ENCODE measurements at regions of chr10 and their contacts with region 1.

Region 1: DNA sequence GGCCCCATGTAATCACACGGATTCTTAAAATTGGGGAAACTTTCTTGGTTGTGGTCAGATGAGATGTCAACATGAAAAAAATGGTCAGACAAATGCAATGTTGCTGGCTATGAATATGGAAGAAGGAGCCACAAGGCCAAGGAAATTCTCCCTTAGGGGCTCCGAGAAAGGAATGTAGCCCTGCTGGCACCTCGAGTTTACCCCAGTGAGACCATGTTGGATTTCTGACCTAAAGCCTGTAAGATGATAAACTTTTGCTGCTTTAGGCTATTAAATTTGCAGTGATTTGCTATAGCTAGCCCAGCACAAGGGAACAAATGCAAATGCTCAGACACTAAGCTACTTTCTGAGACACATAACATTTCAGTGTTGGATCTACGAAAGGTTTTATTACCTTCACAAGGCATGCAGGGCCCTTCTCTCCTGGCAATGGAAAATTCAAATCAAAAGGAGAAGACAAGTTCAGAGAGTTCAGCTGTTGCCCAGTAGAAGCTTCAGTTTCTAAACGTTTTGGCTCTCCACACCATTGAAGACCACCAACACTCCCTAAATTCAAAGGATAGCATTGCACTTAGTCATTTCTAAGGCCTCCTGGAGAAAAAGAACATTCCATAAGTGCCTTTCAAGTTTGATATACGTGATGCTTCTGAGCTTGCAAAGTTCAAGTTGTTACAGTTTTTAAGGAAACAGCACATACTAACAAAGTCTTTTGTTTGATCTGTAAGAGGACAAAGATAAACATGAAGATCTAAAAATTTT is 23.4 kb downstream of the MCMBP start:
- DNase-seq: no peak
- H3K4me3 ChIP-seq: no peak overlapping the region
- H3K27ac ChIP-seq: no peak overlapping the region
- H3K4me1 ChIP-seq: no peaks in the 10 kb centered on the region
- H3K27me3 ChIP-seq: no peaks in the 10 kb centered on the region
- CTCF ChIP-seq: no peak
- EP300 ChIP-seq: no peak
- POLR2A ChIP-seq: no peak

Region 2: DNA sequence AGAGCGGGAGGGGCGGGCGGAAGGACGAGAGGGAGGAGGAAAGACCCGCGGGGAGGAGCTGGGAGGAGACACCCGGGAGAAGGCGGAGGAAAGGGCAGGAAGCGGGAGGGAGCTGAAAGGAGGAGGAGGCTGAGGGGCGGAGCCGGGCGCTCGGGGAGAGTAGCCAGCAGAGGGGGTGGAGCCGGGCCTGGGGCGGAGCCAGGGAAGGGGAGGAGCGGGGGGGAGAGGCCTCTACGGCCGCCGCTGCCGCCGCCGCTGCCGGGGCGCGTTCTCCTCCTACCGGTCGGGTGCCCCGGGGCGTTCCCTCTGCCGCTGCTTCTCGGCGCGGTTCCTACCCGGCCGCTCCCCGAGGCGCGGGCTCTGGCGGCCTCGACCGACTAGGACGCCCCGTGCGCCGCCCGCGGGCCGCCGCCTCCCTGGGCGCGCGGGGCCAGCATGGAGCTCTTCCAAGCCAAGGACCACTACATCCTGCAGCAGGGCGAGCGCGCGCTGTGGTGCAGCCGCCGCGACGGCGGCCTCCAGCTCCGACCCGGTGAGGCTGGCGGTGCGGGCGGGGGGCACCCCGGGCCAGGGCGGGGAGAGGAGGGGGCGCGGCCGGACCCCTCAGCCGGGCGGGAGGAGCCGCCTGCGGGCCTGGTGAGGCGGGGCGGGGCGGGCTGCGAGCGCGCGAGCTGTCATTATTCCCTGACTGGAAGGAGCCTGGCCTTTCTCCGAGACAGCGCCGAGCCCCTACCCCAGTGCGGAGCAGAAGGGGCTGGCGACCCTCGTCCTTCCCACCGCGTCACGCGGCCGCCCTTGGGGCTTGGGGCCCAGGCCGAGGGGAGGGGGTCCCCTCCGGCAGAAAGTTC is 123.2 kb before region 1 on chr10 and contains the start of gene INPP5F:
- intact Hi-C with region 1: no loop called
- DNase-seq: peak; percentile 99
- H3K4me3 ChIP-seq: peak within 1 kb of the TSS; percentile 95
- H3K27ac ChIP-seq: peak within 1 kb of the TSS; percentile 70 to 88
- H3K4me1 ChIP-seq: peaks cover 3% of the 10 kb centered on the region
- H3K27me3 ChIP-seq: no peaks in the 10 kb centered on the region
- CTCF ChIP-seq: peak; percentile 32 to 47 (median 45)
- EP300 ChIP-seq: no peak
- POLR2A ChIP-seq: no peak
- total RNA-seq, gene INPP5F: 8.5 to 18.8 (median 14.4) TPM

Region 3: DNA sequence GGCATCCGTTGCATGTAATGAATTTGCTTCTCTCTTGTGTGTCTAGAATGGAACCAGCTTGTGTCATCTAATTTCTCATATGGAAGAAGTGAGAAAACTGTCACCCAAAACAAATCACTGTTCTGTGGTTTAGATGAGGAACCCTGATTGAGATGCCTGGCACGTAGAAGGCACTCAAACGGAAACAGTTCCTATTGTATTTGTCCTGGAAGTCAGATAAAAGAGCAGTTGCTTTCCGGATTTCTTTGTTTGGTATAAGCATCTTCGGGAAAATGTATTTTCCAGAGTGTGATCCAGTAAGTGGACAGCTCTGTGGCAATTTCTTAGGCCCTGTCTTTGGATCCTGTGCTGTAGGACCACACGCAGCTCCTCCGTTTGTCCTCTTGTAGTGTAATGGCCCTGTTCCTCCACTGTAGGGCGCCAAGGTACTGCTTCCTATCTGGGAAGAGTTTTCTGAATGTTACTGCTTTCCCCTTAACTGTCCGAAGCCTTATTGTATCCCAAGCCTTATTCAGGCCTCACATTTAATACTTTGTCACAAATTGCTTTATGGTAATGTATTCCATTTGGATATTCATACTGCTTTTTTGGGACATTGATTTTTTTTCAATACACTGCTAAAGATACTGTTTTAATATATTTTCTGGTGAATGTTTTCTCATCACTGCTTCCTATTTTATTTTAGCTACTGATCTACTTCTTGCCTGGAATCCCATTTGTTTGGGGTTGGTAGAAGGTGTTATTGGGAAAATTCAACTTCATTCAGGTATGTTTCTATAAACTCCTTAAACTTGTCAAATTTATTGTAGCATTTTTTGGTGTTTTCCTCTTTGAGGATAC is 98.6 kb before region 1 on chr10:
- intact Hi-C with region 1: loop called in 1 of 4 experiments (anchors 10 kb)
- DNase-seq: peak; percentile 51 to 78 (median 62)
- H3K4me3 ChIP-seq: no peak overlapping the region
- H3K27ac ChIP-seq: no peak overlapping the region
- H3K4me1 ChIP-seq: no peaks in the 10 kb centered on the region
- H3K27me3 ChIP-seq: no peaks in the 10 kb centered on the region
- CTCF ChIP-seq: peak; percentile 57 to 75 (median 71)
- EP300 ChIP-seq: no peak
- POLR2A ChIP-seq: no peak

Region 4: DNA sequence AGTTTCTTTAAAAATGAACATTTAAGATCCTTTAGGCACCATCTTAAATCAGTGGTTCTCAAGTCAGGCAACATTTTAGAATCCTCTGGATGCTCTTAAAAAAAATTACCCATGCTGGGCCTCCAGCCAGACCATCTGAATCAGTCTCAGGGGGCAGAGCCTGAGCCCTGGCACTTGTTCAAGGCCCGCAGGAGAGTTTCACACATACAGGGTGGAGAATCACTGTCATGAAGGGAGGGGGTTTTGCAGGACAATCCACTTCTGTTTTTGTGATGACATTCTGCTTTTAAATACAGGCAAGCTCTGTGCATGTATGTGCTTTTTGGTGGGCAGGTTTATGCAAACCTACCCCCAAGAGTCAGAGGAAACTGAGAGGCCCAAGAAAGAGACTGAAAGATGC is 311.9 kb after region 1 on chr10:
- intact Hi-C with region 1: no loop called
- DNase-seq: no peak
- H3K4me3 ChIP-seq: no peak overlapping the region
- H3K27ac ChIP-seq: no peak overlapping the region
- H3K4me1 ChIP-seq: no peaks in the 10 kb centered on the region
- H3K27me3 ChIP-seq: no peaks in the 10 kb centered on the region
- CTCF ChIP-seq: no peak
- EP300 ChIP-seq: no peak
- POLR2A ChIP-seq: no peak